Right cardiac atrium (tissue), 5 donors: ENCODE measurements at regions of chr14 and their contacts with region 1.

Region 1: DNA sequence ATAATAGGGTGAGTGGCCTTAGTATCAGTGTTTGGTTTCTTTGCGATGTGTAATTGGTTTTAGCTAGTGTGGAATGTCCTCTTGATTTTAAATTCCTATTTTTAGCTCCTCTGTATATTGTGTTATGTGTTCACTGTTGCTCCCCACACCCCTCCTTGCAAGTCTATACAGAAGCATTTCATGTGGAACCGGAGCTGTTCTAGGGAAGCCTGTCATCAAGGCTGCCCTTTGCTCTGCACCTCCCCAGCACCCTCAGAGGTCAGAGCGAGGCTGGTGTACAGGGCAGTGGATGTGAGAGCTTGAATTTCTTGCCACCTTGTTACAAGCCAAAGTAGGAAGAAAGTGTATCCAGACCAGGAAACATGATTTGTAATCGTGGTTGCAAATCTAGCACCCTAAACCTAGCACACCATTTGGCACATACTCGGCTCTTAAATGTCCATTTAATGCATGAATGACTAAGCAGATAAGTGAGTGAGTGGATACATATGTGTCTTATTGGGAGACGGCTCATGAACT is 376.8 kb downstream of the RGS6 start:
- DNase-seq: no peak
- ATAC-seq: peak in 1 of 2 donors; percentile 41
- H3K4me3 ChIP-seq: no peak overlapping the region
- H3K27ac ChIP-seq: no peak overlapping the region
- H3K4me1 ChIP-seq: no peaks in the 10 kb centered on the region
- H3K27me3 ChIP-seq: no peaks in the 10 kb centered on the region

Region 2: GRCh38 chr14:72146241-72146640 is 162.8 kb before region 1 on chr14:
- intact Hi-C with region 1: loop called in 1 of 4 experiments (anchors 5 kb)
- DNase-seq: no peak
- ATAC-seq: no peak
- H3K4me3 ChIP-seq: no peak overlapping the region
- H3K27ac ChIP-seq: no peak overlapping the region
- H3K4me1 ChIP-seq: peaks cover 2% of the 10 kb centered on the region
- H3K27me3 ChIP-seq: no peaks in the 10 kb centered on the region

Region 3: GRCh38 chr14:72380456-72380855 is 71.4 kb after region 1 on chr14:
- intact Hi-C with region 1: no loop called
- DNase-seq: no peak
- ATAC-seq: no peak
- H3K4me3 ChIP-seq: no peak overlapping the region
- H3K27ac ChIP-seq: no peak overlapping the region
- H3K4me1 ChIP-seq: no peaks in the 10 kb centered on the region
- H3K27me3 ChIP-seq: no peaks in the 10 kb centered on the region